HCT116 (cell line): ENCODE measurements at regions of chr6 and their contacts with region 1.

Region 1: DNA sequence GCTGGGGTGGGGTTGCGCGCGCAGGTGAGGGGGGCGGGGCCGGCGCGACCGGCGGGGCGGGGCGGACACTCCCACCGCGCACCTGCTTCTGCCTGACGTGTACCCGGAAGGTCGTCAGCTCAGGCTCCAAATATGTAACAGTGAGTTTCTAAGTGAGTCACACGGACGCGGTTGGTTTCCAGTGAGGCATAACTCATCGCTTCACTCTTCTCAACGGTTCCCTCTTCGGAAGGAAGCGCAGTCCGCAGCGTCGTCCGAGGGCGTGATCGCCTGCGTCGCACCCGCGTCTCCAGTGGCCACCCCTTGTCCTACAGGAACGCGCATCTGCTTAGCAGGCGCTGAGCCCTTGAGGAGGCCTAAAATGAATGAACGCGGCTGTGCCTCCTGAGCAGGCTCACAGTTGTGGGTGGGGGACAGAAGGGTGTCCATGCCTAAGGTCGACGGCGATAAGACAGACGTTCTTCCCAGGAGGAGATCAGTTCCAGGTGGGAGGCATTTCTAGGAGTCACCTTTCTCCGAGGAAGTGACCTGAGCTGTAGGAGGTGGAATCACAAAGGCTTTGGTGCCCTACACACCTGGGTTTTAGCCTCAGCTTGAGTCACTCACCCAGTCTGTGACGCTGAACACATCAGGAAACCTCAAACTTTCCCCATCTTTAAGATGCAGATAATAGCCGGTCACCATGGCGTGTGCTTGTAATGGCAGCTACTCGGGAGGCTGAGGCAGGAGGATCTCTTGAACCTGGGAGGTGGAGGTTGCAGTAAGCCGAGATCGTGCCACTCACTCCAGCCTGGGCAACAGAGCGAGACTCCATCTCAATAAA is 50.9 kb upstream of the EZR start:
- DNase-seq: peak; percentile 99
- ATAC-seq: peak; percentile 82
- H3K4me3 ChIP-seq: peak overlapping the region; percentile 37 to 44
- H3K27ac ChIP-seq: peak overlapping the region; percentile 94
- H3K4me1 ChIP-seq: peaks cover 52 to 63% of the 10 kb centered on the region in 2 experiments
- H3K27me3 ChIP-seq: no peaks in the 10 kb centered on the region
- CTCF ChIP-seq: peak in 2 of 3 experiments; percentile 34 to 35; a peak in 4 of 6 replicates
- POLR2A ChIP-seq: peak; percentile 92
- RAD21 ChIP-seq: no peak

Region 2: DNA sequence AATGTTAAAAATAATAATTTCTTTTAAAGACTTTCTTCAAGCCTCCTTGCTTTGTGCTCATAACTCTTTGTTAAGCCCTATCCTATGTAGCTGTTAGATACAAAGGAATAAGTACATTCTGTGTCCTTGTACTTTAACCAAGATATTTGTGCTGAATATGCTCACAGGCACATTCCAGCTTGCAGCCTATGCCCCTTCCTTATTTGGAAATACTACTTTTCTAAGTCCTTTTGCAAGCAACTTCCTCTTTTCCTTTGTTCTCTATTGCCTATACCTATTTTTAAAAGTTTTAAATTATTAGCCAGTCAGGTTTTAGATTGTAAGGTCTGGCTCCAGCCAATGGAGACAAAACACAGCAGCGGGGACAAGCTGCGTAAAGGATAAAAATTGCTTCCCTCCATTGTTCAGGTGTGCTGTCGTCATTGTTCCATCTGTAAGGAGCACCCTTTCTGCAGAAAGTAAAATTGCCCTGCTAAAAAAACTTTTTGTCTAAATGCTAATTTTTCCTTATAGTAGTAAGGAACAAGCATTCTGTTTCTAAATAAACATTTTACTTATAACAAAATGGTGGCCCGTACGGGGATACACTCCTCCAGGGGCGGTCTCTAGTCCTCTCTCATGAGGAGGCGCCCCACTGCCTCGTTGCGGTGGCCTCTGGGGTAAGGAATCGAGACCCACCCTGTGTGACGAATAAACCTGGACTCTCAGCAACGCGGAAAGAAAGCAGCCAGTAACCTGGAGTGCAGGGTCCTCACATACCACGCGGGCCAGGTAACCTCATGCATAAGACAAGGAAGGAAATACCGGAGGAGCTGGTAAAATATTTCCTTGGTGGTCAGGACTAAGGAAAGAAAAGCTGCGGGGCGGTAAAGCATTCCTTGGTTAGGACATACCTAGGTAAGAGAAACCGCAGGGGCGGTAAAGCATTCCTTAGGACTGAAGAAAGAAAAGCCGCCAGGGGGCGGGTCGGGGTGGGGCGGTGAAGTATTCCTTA is 139.8 kb before region 1 on chr6:
- CTCF ChIA-PET with region 1: no interaction called
- POLR2A ChIA-PET with region 1: interaction called, 27 read pairs
- RAD21 ChIA-PET with region 1: no interaction called
- intact Hi-C with region 1: no loop called
- DNase-seq: peak; percentile 100
- ATAC-seq: peak; percentile 85
- H3K4me3 ChIP-seq: peak overlapping the region; percentile 7 to 12; a peak in 2 of 4 replicates
- H3K27ac ChIP-seq: peak overlapping the region; percentile 97
- H3K4me1 ChIP-seq: peaks cover 44 to 79% of the 10 kb centered on the region in 2 experiments
- H3K27me3 ChIP-seq: no peaks in the 10 kb centered on the region
- CTCF ChIP-seq: no peak
- POLR2A ChIP-seq: peak; percentile 37
- RAD21 ChIP-seq: no peak

Region 3: DNA sequence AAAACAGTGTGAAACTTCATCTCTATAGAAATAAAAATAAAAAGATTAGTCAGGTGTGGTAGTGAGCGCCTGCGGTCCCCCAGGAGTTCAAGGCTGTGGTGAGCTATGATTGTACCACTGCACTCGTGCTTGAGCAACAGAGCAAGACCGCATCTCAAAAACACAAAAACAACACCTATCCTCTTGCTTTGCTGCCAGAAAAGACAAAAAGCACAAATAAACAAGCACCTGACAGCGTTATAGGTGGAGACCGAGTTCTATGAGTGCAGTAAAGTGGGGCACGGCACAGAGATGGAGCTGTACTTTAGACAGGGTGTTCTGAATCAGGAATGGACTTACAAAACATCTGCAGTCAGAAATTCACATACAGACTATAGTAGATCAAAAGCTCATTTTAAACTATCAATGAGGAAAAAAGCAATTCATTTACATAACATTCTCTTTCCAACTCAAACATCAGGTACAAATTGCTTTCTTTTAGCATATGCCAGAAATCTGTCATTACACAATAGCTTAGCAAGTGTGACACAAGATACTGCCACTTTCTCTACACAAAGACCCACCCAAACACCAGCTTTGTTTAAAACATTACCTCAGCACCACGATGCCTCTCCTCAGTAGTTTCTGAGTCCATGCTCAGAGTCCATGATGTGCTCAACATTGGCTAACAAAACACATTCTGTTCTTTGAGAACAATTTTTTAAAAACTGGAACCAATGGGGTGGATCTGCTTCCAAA is 60.9 kb before region 1 on chr6:
- CTCF ChIA-PET with region 1: interaction called, 3 read pairs
- POLR2A ChIA-PET with region 1: interaction called, 83 read pairs
- RAD21 ChIA-PET with region 1: no interaction called
- intact Hi-C with region 1: no loop called
- DNase-seq: no peak
- ATAC-seq: no peak
- H3K4me3 ChIP-seq: peak overlapping the region in 1 of 2 experiments; percentile 1; a peak in 1 of 4 replicates
- H3K27ac ChIP-seq: peak overlapping the region; percentile 92
- H3K4me1 ChIP-seq: peaks cover 95 to 98% of the 10 kb centered on the region in 2 experiments
- H3K27me3 ChIP-seq: no peaks in the 10 kb centered on the region
- CTCF ChIP-seq: no peak
- POLR2A ChIP-seq: no peak
- RAD21 ChIP-seq: no peak

Region 4: GRCh38 chr6:158894193-158894592 is 24.2 kb after region 1 on chr6:
- CTCF ChIA-PET with region 1: no interaction called
- POLR2A ChIA-PET with region 1: interaction called, 33 read pairs
- RAD21 ChIA-PET with region 1: interaction called in 1 of 2 experiments, 3 read pairs
- intact Hi-C with region 1: no loop called
- DNase-seq: peak; percentile 86
- ATAC-seq: peak; percentile 90
- H3K4me3 ChIP-seq: peak overlapping the region; percentile 14 to 34; a peak in 3 of 4 replicates
- H3K27ac ChIP-seq: peak overlapping the region; percentile 64
- H3K4me1 ChIP-seq: peaks cover 17 to 39% of the 10 kb centered on the region in 2 experiments
- H3K27me3 ChIP-seq: no peaks in the 10 kb centered on the region
- CTCF ChIP-seq: no peak
- POLR2A ChIP-seq: no peak
- RAD21 ChIP-seq: 0 out of 2 replicates have a peak, but pooled peaks have one; percentile 11

Region 5: GRCh38 chr6:158923805-158924498 is 53.9 kb after region 1 on chr6:
- CTCF ChIA-PET with region 1: no interaction called
- POLR2A ChIA-PET with region 1: interaction called, 19 read pairs
- RAD21 ChIA-PET with region 1: interaction called, 4 to 5 read pairs
- intact Hi-C with region 1: no loop called
- DNase-seq: no peak
- ATAC-seq: no peak
- H3K4me3 ChIP-seq: no peak overlapping the region
- H3K27ac ChIP-seq: no peak overlapping the region
- H3K4me1 ChIP-seq: peaks cover 7 to 38% of the 10 kb centered on the region in 2 experiments; a peak in 3 of 4 replicates
- H3K27me3 ChIP-seq: no peaks in the 10 kb centered on the region
- CTCF ChIP-seq: no peak
- POLR2A ChIP-seq: no peak
- RAD21 ChIP-seq: no peak